IMR-90 (cell line): ENCODE measurements at regions of chr11 and their contacts with region 1.

Region 1: GRCh38 chr11:59106363-59107336 is at the start of gene FAM111B:
- DNase-seq: peak; percentile 91
- ATAC-seq: peak; percentile 96
- H3K4me3 ChIP-seq: peak within 1 kb of the TSS; percentile 52
- H3K27ac ChIP-seq: no peak within 1 kb of the TSS; the same call in 1 of the 2 replicates
- H3K4me1 ChIP-seq: no peaks in the 10 kb centered on the region
- H3K27me3 ChIP-seq: no peaks in the 10 kb centered on the region
- CTCF ChIP-seq: no peak
- POLR2A ChIP-seq: no peak
- RAD21 ChIP-seq: no peak
- total RNA-seq, gene FAM111B: 9.3 and 13.9 TPM in 2 replicates

Region 2: GRCh38 chr11:59142530-59143507 is 36.2 kb after region 1 on chr11 and contains the start of gene FAM111A:
- CTCF ChIA-PET with region 1: interaction called, 3 read pairs
- POLR2A ChIA-PET with region 1: no interaction called
- dilution Hi-C with region 1: no loop called
- in situ Hi-C with region 1: no loop called
- intact Hi-C with region 1: loop called (anchors 2 kb)
- DNase-seq: peak; percentile 86
- ATAC-seq: peak; percentile 90
- H3K4me3 ChIP-seq: peak within 1 kb of the TSS; percentile 82
- H3K27ac ChIP-seq: peak within 1 kb of the TSS; percentile 82
- H3K4me1 ChIP-seq: peaks cover 6% of the 10 kb centered on the region
- H3K27me3 ChIP-seq: no peaks in the 10 kb centered on the region
- CTCF ChIP-seq: peak; percentile 38
- POLR2A ChIP-seq: no peak
- RAD21 ChIP-seq: 0 out of 2 replicates have a peak, but pooled peaks have one; percentile 7
- total RNA-seq, gene FAM111A: 36.4 and 46.1 TPM in 2 replicates

Region 3: DNA sequence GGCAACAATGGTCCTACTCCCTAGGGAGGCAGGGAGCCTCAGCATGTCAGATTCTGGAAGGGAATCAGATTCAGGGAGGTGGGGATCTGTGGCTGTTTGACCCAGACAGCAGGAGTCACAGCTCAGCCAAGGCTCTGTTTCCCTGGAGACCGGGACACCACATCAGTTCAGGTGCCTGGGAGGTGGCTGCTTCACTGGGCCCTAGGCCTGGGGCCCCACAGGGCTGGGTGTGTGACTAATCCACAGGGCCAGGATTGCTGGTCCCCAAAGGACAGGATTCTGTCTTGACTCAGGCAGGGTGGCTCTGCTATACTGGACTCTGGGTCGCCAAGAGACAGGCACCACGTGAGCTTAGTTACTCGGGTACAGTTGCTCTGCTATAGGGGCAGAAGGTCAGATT is 248.6 kb after region 1 on chr11:
- CTCF ChIA-PET with region 1: no interaction called
- POLR2A ChIA-PET with region 1: no interaction called
- dilution Hi-C with region 1: no loop called
- in situ Hi-C with region 1: no loop called
- intact Hi-C with region 1: no loop called
- DNase-seq: no peak
- ATAC-seq: no peak
- H3K4me3 ChIP-seq: no peak overlapping the region
- H3K27ac ChIP-seq: no peak overlapping the region
- H3K4me1 ChIP-seq: no peaks in the 10 kb centered on the region
- H3K27me3 ChIP-seq: no peaks in the 10 kb centered on the region
- CTCF ChIP-seq: no peak
- POLR2A ChIP-seq: no peak
- RAD21 ChIP-seq: no peak